ENCODE measurements at regions of chr11 and their contacts with region 1.

Region 1: DNA sequence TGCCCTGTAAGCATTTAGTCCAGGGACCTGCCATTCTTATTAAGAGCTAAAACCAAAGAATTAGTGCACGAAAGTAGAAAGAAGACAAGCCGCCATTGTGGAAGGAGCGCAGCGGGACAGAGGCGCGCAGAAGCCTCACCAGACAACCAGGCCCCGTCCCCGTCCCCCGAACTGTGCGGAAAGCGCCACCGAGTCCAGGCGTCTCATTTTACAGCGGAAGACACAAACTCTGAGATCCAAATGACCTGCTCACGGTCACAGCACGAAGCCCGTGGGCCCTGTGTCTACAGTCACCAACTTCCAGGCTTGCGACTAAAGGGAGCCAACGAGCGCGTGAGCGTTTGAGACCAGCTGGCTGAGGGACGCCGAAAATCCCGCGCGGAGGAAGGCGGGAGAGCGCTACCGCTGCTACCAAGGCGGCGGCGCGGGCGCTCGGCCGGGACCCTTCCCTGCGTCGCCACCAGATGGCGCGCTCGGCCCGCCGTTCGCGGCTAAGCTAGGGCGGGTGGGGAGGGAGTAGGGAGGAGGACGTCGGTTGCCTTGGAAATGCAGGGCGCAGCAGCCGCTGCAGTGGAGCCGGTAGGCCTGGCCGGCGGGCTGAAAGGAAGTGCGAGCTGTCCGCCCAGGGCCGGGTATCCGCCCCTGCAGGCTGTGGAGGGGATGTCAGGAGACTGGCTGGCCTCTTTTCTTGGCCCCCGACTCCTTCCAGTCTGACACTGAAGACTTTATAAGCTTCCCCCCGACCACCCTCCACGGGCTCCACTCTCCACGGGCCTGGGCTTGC is 434 bp upstream of the CCDC83 start:
- DNase-seq: peak; percentile 94
- H3K4me3 ChIP-seq: peak overlapping the region; percentile 40 to 82 (median 49)
- H3K27ac ChIP-seq: peak overlapping the region; percentile 92
- H3K4me1 ChIP-seq: peaks cover 4% of the 10 kb centered on the region
- H3K27me3 ChIP-seq: no peaks in the 10 kb centered on the region
- CTCF ChIP-seq: peak; percentile 58 to 79
- POLR2A ChIP-seq: peak; percentile 65

Region 2: DNA sequence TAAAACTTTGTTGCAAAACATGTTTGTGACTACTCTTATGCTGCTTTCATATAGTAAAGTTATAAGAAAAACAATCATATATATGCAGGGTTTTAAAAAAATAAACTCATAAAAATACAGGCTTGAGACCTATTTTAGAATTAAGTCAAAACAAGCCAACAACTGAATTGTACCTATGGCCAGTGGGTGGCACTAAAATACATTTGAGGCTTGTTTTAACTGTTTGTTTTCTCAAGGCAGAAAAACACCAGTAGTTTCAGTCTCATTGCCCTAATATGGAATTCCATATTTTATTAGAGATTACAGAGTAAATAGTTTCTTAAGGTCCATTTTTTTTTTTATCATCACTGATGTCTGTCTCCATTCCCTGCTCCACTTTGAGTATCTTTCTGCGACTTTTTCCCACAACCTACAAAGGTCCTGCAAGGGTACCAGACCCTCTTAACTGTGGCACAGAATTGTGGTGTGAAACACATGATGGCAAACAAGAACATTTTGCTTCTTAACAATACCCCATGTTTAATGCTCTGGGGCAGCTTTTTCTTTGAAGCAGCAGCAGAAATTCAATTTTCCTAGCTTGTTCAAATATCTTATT is 160.3 kb before region 1 on chr11:
- CTCF ChIA-PET with region 1: interaction called, 29 read pairs
- POLR2A ChIA-PET with region 1: no interaction called
- dilution Hi-C with region 1: no loop called
- intact Hi-C with region 1: loop called (anchors 1 kb)
- DNase-seq: peak; percentile 66
- H3K4me3 ChIP-seq: no peak overlapping the region
- H3K27ac ChIP-seq: no peak overlapping the region
- H3K4me1 ChIP-seq: no peaks in the 10 kb centered on the region
- H3K27me3 ChIP-seq: peaks cover 8 to 10% of the 10 kb centered on the region in 2 experiments
- CTCF ChIP-seq: peak; percentile 29 to 43
- POLR2A ChIP-seq: no peak

Region 3: GRCh38 chr11:85844426-85845129 is 10.2 kb before region 1 on chr11:
- CTCF ChIA-PET with region 1: interaction called, 10 read pairs
- POLR2A ChIA-PET with region 1: no interaction called
- dilution Hi-C with region 1: no loop called
- intact Hi-C with region 1: no loop called
- DNase-seq: peak; percentile 11
- H3K4me3 ChIP-seq: no peak overlapping the region
- H3K27ac ChIP-seq: no peak overlapping the region
- H3K4me1 ChIP-seq: peaks cover 3% of the 10 kb centered on the region
- H3K27me3 ChIP-seq: no peaks in the 10 kb centered on the region
- CTCF ChIP-seq: no peak
- POLR2A ChIP-seq: no peak

Region 4: DNA sequence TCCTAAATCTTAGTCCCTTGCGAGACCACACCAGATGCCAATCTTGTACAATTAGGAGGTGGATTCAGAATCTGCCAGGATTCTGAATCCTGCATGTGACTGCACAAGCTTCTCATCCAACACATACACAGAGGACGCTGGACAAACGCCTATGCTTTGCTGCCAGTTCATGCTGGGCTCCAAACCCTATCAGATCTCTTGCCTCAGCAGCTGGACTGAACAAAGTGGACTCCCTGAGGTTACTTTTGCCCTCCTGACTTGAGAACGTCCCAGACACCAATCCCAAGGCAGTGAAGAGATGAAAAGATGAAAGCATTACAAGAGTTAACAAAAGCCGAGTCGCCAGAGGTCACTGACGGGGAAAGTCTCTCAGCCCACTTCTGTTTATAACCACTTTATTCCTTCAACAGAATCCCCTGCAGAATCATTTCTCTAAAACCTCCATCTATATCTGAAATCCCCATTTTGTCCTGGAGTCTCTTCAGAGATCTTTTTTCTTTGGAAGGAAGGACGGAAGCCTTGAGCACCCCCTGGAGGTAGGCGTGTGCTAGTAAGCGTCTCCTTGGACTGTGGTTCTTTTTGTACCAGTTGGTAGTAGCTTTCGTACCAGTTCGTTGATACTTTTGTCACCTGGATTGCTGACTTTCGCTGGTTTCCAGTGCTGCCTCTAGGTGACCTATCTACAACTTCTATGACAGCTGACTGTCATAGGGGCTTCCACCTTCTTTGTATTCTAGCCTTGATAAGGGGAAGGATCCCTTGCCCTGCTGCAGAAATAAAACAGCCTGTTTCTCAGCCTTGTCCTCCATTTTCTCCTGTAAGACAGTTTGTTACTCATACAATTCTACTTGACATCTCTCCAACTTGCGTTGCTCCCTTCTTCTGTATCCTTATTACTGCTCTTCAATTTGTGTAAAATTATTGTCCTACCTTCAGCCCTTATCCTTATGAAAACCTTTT is 363.7 kb after region 1 on chr11:
- CTCF ChIA-PET with region 1: interaction called, 16 read pairs
- POLR2A ChIA-PET with region 1: no interaction called
- dilution Hi-C with region 1: no loop called
- intact Hi-C with region 1: loop called (anchors 1 kb)
- DNase-seq: peak; percentile 82
- H3K4me3 ChIP-seq: peak overlapping the region in 1 of 3 experiments; percentile 3
- H3K27ac ChIP-seq: no peak overlapping the region
- H3K4me1 ChIP-seq: no peaks in the 10 kb centered on the region
- H3K27me3 ChIP-seq: peaks cover 1 to 12% of the 10 kb centered on the region in 2 experiments
- CTCF ChIP-seq: peak; percentile 86 to 91
- POLR2A ChIP-seq: no peak

Region 5: GRCh38 chr11:86418917-86419316 is 564.2 kb after region 1 on chr11:
- CTCF ChIA-PET with region 1: interaction called, 4 read pairs
- POLR2A ChIA-PET with region 1: no interaction called
- dilution Hi-C with region 1: no loop called
- intact Hi-C with region 1: loop called (anchors 10 kb)
- DNase-seq: peak; percentile 11
- H3K4me3 ChIP-seq: no peak overlapping the region
- H3K27ac ChIP-seq: no peak overlapping the region
- H3K4me1 ChIP-seq: no peaks in the 10 kb centered on the region
- H3K27me3 ChIP-seq: no peaks in the 10 kb centered on the region
- CTCF ChIP-seq: peak in 1 of 2 donors; percentile 4
- POLR2A ChIP-seq: no peak

Measured in endothelial cell of umbilical vein (primary cell).